Activated CD4-positive, alpha-beta T cell treated with anti-CD3 and anti-CD28 coated beads for 36 hours (primary cell): ENCODE measurements at regions of chr17 and their contacts with region 1.

Region 1: DNA sequence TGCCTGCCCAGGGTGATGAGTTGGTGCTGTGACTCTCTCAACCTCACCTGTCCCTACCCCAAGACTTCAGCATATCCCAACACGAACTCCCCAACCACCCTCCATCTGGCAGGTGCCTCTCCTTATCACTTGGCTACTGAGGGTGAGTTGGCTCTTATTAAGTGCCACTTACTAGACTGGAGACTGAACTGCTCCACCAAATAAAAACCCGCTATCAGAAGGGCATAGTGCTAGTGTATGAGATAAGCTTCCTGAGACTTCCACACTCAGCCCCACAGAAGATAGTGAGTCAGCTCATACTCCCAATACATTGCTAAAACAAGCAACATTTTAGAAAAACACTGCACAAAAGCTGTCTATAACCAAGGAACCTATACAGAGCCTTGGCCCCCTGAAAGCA is 16.0 kb upstream of the CCL18 start:
- DNase-seq: no peak
- ATAC-seq: no peak
- H3K4me3 Mint-ChIP-seq: no peak overlapping the region
- H3K27ac Mint-ChIP-seq: no peak overlapping the region
- H3K4me1 Mint-ChIP-seq: no peaks in the 10 kb centered on the region
- H3K27me3 Mint-ChIP-seq: peaks cover 36% of the 10 kb centered on the region

Region 2: DNA sequence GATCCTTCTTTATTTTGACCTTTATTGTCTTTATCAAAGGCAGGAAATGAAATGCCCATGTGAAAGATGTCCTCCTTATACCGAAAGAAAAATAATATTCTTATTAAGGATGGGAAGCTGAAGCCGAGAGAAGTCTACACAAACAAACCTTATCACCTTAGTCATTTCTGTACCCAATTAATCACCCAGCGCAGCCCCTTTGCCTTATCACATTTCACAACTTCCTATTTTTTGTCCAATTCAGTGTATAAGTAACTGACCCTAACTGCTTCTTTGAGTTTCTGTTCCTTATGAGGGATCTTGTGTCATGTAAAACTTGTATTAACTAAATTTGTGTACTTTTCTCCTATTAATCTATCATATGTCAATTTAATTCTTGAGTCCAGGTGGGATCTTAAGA is 13.9 kb before region 1 on chr17:
- CTCF ChIA-PET with region 1: no interaction called
- POLR2A ChIA-PET with region 1: no interaction called
- intact Hi-C with region 1: no loop called
- DNase-seq: no peak
- ATAC-seq: no peak
- H3K4me3 Mint-ChIP-seq: no peak overlapping the region
- H3K27ac Mint-ChIP-seq: no peak overlapping the region
- H3K4me1 Mint-ChIP-seq: no peaks in the 10 kb centered on the region
- H3K27me3 Mint-ChIP-seq: peaks cover 24% of the 10 kb centered on the region

Region 3: DNA sequence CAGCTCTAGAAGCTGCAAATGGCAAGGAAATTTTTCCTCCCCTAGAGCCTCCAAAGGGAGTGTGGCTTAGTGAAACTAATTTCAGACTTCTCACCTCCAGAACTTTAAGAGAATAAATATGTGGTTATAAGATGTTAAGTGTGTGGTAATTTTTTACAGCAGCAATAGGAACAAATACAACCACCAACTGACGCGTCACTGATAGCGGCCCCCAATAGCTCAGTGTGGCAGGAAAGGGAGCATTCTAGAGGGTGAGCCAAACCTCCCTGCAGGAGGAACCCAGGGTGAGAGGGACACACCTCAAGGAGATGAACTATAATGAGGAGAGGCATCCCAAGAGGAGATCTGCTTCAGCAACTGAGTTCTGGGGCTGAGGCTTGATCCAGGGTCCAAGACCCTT is 59.6 kb after region 1 on chr17:
- CTCF ChIA-PET with region 1: no interaction called
- POLR2A ChIA-PET with region 1: no interaction called
- intact Hi-C with region 1: loop called in 1 of 2 experiments (anchors 2 kb)
- DNase-seq: no peak
- ATAC-seq: no peak
- H3K4me3 Mint-ChIP-seq: no peak overlapping the region
- H3K27ac Mint-ChIP-seq: no peak overlapping the region
- H3K4me1 Mint-ChIP-seq: peaks cover 12% of the 10 kb centered on the region
- H3K27me3 Mint-ChIP-seq: peaks cover 37% of the 10 kb centered on the region